ENCODE measurements at regions of chr5 and their contacts with region 1.

Region 1: DNA sequence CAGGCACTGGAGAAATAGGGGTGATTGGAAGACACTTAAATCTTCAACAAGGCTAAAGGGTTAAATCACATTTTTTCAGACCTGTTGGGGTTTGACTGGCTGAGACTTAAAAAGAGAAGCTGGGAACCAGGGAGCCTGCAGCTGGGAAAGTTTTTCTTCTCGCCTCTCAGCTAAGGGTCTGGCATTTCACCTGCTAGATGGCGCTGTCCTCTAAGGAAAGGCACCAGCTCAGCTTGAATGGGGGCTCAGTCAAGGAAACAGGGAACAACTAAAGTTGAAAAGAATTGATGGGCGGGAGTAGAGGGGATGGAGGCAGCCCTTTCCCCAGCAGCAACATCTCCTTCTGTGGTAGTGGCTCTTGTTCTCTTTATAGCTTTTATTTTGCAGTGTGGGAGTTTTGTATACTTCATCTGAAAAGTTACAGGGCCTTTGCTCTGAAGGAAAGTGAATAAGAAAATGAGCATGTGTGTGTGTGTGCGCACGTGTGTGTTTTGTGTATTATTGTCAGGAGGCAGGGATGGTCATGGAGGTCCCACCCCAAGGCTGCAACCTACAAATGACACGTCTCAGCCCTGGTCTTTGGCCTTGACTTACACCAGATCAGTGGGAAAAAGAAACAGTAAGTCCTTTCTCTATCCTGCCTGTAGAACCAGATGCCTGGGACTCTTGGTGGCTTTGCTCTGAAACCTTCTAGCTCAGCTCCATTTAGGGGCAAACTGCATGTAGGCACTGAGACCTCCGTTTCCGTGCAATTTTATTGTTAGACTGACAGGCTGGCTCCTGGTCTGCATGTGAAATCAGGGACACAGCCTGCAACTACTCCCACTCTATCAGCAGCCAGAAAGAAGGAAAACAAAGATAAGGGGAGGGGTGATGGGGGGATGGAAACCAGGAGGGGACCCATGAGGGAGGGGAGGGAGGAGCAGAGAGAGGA is 316.2 kb upstream of the CLINT1 start:
- DNase-seq: peak; percentile 36 to 79
- H3K4me3 ChIP-seq: no peak overlapping the region
- H3K4me1 ChIP-seq: no peaks in the 10 kb centered on the region
- H3K27me3 ChIP-seq: peaks cover 2% of the 10 kb centered on the region; the same call in 1 of the 2 replicates

Region 2: GRCh38 chr5:158682631-158683030 is 507.4 kb after region 1 on chr5:
- in situ Hi-C with region 1: loop called (anchors 10 kb)
- DNase-seq: no peak
- H3K4me3 ChIP-seq: no peak overlapping the region
- H3K4me1 ChIP-seq: no peaks in the 10 kb centered on the region
- H3K27me3 ChIP-seq: peaks cover 8% of the 10 kb centered on the region

Region 3: DNA sequence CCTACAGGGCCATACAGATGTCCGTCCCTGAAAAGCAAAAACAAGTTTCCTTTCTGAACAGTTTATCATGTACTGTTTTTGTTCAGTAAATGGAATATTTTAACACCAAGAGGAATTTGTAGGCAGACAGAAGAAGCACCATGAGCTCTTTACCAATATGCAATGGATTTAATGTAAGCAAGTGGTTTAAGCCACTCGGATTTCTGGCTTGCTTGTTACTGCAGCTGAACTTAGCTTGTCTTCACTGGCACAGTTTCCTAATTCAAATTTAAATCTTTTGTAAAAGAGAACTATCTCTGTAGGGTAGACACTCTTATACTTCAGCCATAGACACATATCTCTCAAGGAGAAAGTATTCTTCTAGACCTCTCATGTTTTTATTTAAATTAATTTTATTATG is 937.3 kb after region 1 on chr5:
- in situ Hi-C with region 1: loop called (anchors 5 kb)
- DNase-seq: no peak
- H3K4me3 ChIP-seq: no peak overlapping the region
- H3K4me1 ChIP-seq: no peaks in the 10 kb centered on the region
- H3K27me3 ChIP-seq: peaks cover 21% of the 10 kb centered on the region